IMR-90 (cell line): ENCODE measurements at regions of chr1 and their contacts with region 1.

Region 1: DNA sequence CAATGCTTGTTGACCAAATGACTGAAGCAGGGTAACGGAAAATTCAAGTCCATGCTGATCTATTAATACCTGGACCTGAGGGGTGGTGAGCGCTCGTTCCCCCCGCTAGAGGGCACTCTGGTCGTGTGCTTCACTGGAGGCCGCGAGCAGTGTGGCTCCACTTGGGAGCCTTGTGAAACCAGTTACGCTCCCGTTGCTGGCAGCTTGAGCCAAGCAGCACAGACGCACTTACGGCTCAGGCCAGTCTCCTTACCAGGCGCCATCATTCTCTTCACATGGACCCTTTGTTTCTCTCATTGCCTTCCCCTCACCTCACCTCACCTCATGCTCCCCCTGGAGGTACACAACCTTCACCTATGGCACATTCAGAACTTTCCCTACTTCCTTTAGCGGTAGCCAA is 49.7 kb upstream of the TSPAN2 start:
- DNase-seq: peak; percentile 94
- ATAC-seq: peak; percentile 79
- H3K4me3 ChIP-seq: no peak overlapping the region
- H3K27ac ChIP-seq: peak overlapping the region; percentile 1; the same call in 1 of the 2 replicates
- H3K4me1 ChIP-seq: peaks cover 15% of the 10 kb centered on the region
- H3K27me3 ChIP-seq: no peaks in the 10 kb centered on the region
- CTCF ChIP-seq: peak; percentile 98
- POLR2A ChIP-seq: peak; percentile 51; the same call in 1 of the 2 replicates
- RAD21 ChIP-seq: peak; percentile 100

Region 2: GRCh38 chr1:114997510-114998289 is 141.3 kb before region 1 on chr1:
- CTCF ChIA-PET with region 1: no interaction called
- POLR2A ChIA-PET with region 1: interaction called, 10 read pairs
- dilution Hi-C with region 1: no loop called
- in situ Hi-C with region 1: no loop called
- intact Hi-C with region 1: no loop called
- DNase-seq: no peak
- ATAC-seq: no peak
- H3K4me3 ChIP-seq: no peak overlapping the region
- H3K27ac ChIP-seq: no peak overlapping the region
- H3K4me1 ChIP-seq: no peaks in the 10 kb centered on the region
- H3K27me3 ChIP-seq: no peaks in the 10 kb centered on the region
- CTCF ChIP-seq: no peak
- POLR2A ChIP-seq: no peak
- RAD21 ChIP-seq: no peak

Region 3: DNA sequence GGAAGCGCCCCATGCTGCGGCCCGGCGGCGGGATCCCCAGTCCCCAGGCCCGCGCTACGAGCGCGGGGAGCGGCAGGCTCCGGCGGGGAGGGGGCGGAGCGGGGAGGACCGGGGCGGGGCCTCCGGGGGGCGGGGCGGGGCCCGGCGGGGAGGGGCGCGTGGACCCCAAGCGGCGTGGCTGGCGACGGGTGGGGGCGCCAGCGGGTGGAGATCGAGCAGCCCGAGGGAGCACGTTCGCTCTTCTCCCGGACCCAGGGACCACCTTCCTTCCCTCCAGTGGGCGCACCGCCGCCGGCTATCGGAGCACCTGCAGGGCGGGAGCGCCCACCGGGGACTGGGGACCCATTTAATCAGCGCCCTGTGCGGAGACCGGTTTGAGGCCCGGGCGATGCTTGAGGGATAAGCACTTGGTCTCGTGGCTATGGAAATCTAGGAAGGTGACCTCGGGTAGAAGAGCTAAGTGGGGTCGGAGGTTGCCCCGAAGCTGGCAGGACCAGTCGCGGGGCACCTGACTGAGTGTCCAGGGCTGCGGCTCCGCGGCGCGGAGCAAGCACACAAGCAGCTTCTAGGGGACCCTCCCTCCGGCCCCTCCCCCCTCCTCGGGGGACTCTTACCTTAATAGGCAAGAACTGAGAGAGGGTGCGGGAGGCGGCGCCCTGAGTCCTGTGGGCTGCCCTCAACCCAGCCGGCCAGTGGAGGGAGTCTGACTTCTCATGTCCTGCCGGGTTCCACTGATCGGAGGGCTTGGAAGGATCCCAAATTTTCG is 49.4 kb before region 1 on chr1 and contains the start of gene TSPAN2:
- CTCF ChIA-PET with region 1: no interaction called
- POLR2A ChIA-PET with region 1: no interaction called
- dilution Hi-C with region 1: no loop called
- in situ Hi-C with region 1: no loop called
- intact Hi-C with region 1: no loop called
- DNase-seq: no peak
- ATAC-seq: peak; percentile 85
- H3K4me3 ChIP-seq: peak within 1 kb of the TSS; percentile 70
- H3K27ac ChIP-seq: peak within 1 kb of the TSS; percentile 67
- H3K4me1 ChIP-seq: peaks cover 2% of the 10 kb centered on the region
- H3K27me3 ChIP-seq: no peaks in the 10 kb centered on the region; the same call in none of the 2 replicates
- CTCF ChIP-seq: peak; percentile 35
- POLR2A ChIP-seq: no peak
- RAD21 ChIP-seq: no peak
- total RNA-seq, gene TSPAN2: 0.18 and 0.83 TPM in 2 replicates

Region 4: GRCh38 chr1:115275212-115275611 is 136.2 kb after region 1 on chr1:
- CTCF ChIA-PET with region 1: interaction called, 4 read pairs
- POLR2A ChIA-PET with region 1: interaction called, 3 read pairs
- dilution Hi-C with region 1: no loop called
- in situ Hi-C with region 1: no loop called
- intact Hi-C with region 1: loop called (anchors 2 kb)
- DNase-seq: peak; percentile 30
- ATAC-seq: no peak; the same call in 1 of the 2 replicates
- H3K4me3 ChIP-seq: no peak overlapping the region
- H3K27ac ChIP-seq: no peak overlapping the region
- H3K4me1 ChIP-seq: peaks cover 3% of the 10 kb centered on the region; the same call in 1 of the 2 replicates
- H3K27me3 ChIP-seq: no peaks in the 10 kb centered on the region
- CTCF ChIP-seq: peak; percentile 48
- POLR2A ChIP-seq: no peak
- RAD21 ChIP-seq: peak; percentile 49

Region 5: GRCh38 chr1:115337633-115338456 is 198.9 kb after region 1 on chr1 and contains the start of gene NGF:
- CTCF ChIA-PET with region 1: no interaction called
- POLR2A ChIA-PET with region 1: no interaction called
- dilution Hi-C with region 1: no loop called
- in situ Hi-C with region 1: no loop called
- intact Hi-C with region 1: loop called (anchors 1 kb)
- DNase-seq: peak; percentile 78
- ATAC-seq: peak; percentile 96
- H3K4me3 ChIP-seq: peak within 1 kb of the TSS; percentile 84
- H3K27ac ChIP-seq: peak within 1 kb of the TSS; percentile 45; the same call in 1 of the 2 replicates
- H3K4me1 ChIP-seq: peaks cover 5% of the 10 kb centered on the region
- H3K27me3 ChIP-seq: peaks cover 7% of the 10 kb centered on the region; the same call in 1 of the 2 replicates
- CTCF ChIP-seq: no peak
- POLR2A ChIP-seq: peak; percentile 86
- RAD21 ChIP-seq: peak; percentile 38
- total RNA-seq, gene NGF: 8.3 and 12.5 TPM in 2 replicates

Region 6: GRCh38 chr1:115506926-115507589 is 368.1 kb after region 1 on chr1:
- CTCF ChIA-PET with region 1: interaction called, 6 read pairs
- POLR2A ChIA-PET with region 1: no interaction called
- dilution Hi-C with region 1: no loop called
- in situ Hi-C with region 1: no loop called
- intact Hi-C with region 1: loop called (anchors 1 kb)
- DNase-seq: peak; percentile 63
- ATAC-seq: peak; percentile 91
- H3K4me3 ChIP-seq: no peak overlapping the region
- H3K27ac ChIP-seq: no peak overlapping the region
- H3K4me1 ChIP-seq: no peaks in the 10 kb centered on the region
- H3K27me3 ChIP-seq: no peaks in the 10 kb centered on the region
- CTCF ChIP-seq: peak; percentile 57
- POLR2A ChIP-seq: no peak
- RAD21 ChIP-seq: peak; percentile 74

Region 7: DNA sequence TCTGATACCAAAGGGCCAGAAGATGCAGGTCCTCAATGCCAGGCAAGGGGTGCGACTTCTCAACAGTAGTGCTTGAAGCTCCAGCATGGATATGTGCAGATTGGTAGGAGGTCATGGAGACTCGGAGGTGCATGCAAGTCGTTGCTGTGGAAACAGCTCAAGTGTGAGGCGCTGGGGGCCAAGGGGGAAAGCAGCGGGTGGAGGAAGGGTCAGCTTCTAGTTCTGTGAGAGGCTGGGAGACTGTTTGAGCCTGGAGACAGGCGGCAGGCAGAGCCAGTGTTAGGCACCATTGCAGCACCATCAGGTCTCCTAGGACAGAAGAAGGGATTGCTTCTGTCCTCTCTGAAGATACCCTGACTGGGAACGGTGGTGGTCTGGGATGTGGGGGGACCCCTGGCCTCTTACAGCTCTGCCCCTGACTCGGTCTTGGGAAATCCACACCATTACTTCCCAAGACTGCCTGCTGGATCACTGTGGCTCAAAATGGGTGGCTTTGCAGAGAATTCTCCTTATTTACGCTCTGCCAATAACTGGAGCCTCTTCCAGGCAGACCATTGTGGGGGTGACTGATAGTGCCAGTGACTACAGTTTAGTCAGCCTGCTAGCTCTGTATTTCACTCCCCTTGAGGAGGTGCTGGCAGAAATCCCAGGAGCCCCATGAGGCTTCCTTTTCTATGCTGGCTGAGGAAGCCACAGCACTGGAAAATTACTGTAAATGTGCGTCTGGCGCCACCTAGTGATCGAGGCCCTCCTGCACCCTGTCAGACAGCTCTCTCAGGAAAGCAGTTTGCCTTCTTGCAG is 456.5 kb after region 1 on chr1:
- CTCF ChIA-PET with region 1: interaction called, 19 read pairs
- POLR2A ChIA-PET with region 1: no interaction called
- dilution Hi-C with region 1: loop called (anchors 25 kb)
- in situ Hi-C with region 1: loop called (anchors 5 kb)
- intact Hi-C with region 1: loop called (anchors 1 kb)
- DNase-seq: peak; percentile 96
- ATAC-seq: peak; percentile 96
- H3K4me3 ChIP-seq: no peak overlapping the region
- H3K27ac ChIP-seq: no peak overlapping the region
- H3K4me1 ChIP-seq: 0 out of 2 replicates have a peak, but pooled peaks cover 2% of the 10 kb centered on the region
- H3K27me3 ChIP-seq: no peaks in the 10 kb centered on the region
- CTCF ChIP-seq: peak; percentile 99
- POLR2A ChIP-seq: peak; percentile 61; the same call in 1 of the 2 replicates
- RAD21 ChIP-seq: peak; percentile 98

Region 8: GRCh38 chr1:116570358-116571200 is 1431.6 kb after region 1 on chr1 and contains the start of gene CD58:
- CTCF ChIA-PET with region 1: no interaction called
- POLR2A ChIA-PET with region 1: no interaction called
- dilution Hi-C with region 1: no loop called
- in situ Hi-C with region 1: no loop called
- intact Hi-C with region 1: no loop called
- DNase-seq: peak; percentile 63
- ATAC-seq: peak; percentile 95
- H3K4me3 ChIP-seq: peak within 1 kb of the TSS; percentile 80
- H3K27ac ChIP-seq: peak within 1 kb of the TSS; percentile 23; the same call in 1 of the 2 replicates
- H3K4me1 ChIP-seq: peaks cover 2% of the 10 kb centered on the region; the same call in 1 of the 2 replicates
- H3K27me3 ChIP-seq: peaks cover 10% of the 10 kb centered on the region
- CTCF ChIP-seq: peak; percentile 63
- POLR2A ChIP-seq: no peak; the same call in 1 of the 2 replicates
- RAD21 ChIP-seq: peak; percentile 27; the same call in 1 of the 2 replicates
- total RNA-seq, gene CD58: 5.4 and 6.4 TPM in 2 replicates